Endothelial cell of umbilical vein (primary cell): ENCODE measurements at regions of chr16 and their contacts with region 1.

Region 1: GRCh38 chr16:11715246-11715947 is 27.3 kb downstream of the TXNDC11 start:
- DNase-seq: no peak
- H3K4me3 ChIP-seq: no peak overlapping the region
- H3K27ac ChIP-seq: no peak overlapping the region
- H3K4me1 ChIP-seq: no peaks in the 10 kb centered on the region
- H3K27me3 ChIP-seq: no peaks in the 10 kb centered on the region
- CTCF ChIP-seq: no peak
- POLR2A ChIP-seq: no peak

Region 2: DNA sequence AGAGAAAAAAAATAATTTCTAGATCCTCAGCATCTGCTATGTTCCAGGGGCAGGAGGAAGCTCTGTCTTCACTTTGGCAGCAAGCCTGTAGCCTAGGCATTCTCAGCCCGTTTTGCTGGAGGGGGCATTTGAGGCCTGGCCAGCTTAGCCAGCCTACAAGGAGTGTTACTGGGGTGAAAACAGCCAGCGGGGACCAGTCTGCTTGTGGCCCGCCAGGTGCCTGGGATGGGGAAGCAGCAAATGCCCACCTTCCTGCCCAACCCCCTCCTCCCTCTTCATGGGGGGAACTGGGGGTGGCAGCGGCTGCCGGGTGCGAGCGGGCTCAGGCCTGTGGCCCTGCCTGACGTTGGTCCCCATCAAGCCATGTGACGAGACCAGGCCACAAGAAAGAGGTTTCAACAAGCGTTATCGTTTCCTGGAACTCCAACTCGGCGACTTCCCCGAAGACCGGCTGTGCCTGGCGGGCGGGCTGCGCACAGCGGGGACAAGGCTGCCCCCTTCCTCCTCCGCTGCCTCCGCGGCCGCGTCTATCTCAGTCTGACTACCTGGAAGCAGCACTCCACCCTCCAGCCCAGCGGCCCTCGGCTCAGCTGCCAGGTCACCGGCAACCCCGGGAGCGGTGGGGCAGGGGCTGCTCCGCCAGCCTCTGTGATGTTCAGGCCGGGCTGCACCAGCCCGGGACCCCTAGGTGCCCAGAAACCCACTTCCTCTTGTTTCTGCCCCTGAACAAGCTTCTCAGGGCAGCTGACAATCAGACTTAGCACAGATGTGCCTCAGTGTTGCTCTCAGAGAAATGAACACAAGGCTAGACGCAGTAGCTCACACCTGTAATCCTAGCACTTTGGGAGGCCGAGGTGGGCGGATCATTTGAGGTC is 482.3 kb before region 1 on chr16:
- CTCF ChIA-PET with region 1: no interaction called
- POLR2A ChIA-PET with region 1: no interaction called
- dilution Hi-C with region 1: no loop called
- intact Hi-C with region 1: no loop called
- DNase-seq: no peak
- H3K4me3 ChIP-seq: no peak overlapping the region
- H3K27ac ChIP-seq: no peak overlapping the region
- H3K4me1 ChIP-seq: no peaks in the 10 kb centered on the region
- H3K27me3 ChIP-seq: no peaks in the 10 kb centered on the region
- CTCF ChIP-seq: no peak
- POLR2A ChIP-seq: no peak

Region 3: GRCh38 chr16:11386791-11387546 is 328.4 kb before region 1 on chr16:
- CTCF ChIA-PET with region 1: interaction called, 26 read pairs
- POLR2A ChIA-PET with region 1: no interaction called
- dilution Hi-C with region 1: no loop called
- intact Hi-C with region 1: no loop called
- DNase-seq: peak; percentile 13
- H3K4me3 ChIP-seq: no peak overlapping the region
- H3K27ac ChIP-seq: no peak overlapping the region
- H3K4me1 ChIP-seq: no peaks in the 10 kb centered on the region
- H3K27me3 ChIP-seq: no peaks in the 10 kb centered on the region
- CTCF ChIP-seq: peak; percentile 47 to 70
- POLR2A ChIP-seq: no peak

Region 4: DNA sequence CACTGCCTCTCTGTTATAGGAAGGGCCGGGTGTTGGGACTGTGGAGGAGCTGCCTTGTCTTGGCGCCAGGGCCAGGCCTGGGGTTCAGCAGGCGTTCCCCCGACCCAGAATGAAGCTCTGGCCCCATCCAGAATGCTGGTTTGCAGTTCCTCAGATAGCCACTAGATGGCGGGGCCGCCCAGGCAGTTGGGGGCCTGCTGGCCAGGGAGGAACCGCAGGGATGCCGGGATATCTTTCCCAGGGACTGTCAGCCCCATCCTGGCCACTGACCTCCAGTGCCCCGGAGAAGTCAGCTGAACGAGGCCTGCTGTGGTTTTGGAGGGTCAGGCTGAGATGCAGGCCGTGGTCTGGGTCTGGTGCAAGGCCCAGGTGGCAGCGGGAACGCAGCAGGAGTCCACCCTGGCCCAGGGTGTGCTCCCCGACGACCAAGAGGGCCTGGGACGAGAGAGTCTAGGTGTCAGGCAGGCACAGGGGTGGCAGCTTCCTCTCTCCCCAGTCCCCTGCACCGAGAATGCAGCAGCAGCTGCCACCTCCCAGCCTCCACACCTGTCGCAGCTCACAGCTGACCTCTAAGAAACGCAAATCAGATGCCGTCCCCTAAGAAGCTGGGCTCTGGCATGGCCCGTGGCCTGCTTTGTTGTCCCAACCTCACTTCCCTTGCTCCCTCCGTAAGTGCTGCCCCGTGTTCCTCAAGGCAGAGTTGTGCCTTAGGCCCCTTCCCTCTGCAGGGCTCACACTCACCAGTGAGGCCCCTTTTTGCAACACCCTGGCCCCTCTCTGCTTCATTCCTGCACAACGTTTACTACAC is 319.0 kb before region 1 on chr16:
- CTCF ChIA-PET with region 1: interaction called, 81 read pairs
- POLR2A ChIA-PET with region 1: no interaction called
- dilution Hi-C with region 1: no loop called
- intact Hi-C with region 1: loop called (anchors 1 kb)
- DNase-seq: peak; percentile 39
- H3K4me3 ChIP-seq: no peak overlapping the region
- H3K27ac ChIP-seq: no peak overlapping the region
- H3K4me1 ChIP-seq: no peaks in the 10 kb centered on the region
- H3K27me3 ChIP-seq: no peaks in the 10 kb centered on the region
- CTCF ChIP-seq: peak; percentile 95 to 96
- POLR2A ChIP-seq: no peak

Region 5: DNA sequence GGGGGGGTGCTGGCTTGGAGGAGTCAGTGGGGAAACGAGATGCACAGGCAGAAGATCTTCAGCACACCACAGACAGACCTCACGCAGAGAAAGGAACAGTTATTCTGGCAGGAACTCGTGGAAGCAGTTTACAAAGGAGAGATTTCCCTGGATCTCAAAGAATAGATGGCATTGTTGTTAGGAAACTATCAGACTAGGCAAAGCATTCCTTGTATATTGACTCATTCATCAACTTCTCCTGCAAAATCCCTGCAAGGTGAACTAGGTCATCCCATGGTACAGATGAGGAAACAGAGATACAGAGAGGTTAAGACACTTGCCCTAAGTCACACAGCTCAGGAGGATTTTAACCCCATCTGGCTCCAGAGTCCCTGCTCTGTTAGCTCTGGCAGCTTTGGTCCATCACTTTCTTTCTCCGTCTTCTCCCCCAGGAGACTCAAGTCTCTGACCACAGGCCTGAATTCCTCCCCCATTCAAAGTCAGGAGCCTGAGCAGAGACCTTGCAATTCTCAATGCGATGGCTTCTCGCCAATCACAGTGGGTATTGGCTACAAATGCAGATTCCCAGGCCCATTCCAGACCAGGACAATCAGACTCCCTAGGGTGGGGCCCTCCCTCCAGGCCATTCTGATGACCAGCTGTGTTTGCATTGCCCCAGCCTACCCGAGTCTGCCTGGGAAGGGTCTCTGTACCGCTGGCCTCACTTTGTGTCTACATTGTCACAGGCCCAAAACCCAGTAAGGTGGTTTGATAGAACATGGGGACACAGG is 185.0 kb before region 1 on chr16:
- CTCF ChIA-PET with region 1: interaction called, 41 read pairs
- POLR2A ChIA-PET with region 1: no interaction called
- dilution Hi-C with region 1: no loop called
- intact Hi-C with region 1: loop called (anchors 1 kb)
- DNase-seq: peak; percentile 56
- H3K4me3 ChIP-seq: no peak overlapping the region
- H3K27ac ChIP-seq: no peak overlapping the region
- H3K4me1 ChIP-seq: peaks cover 9% of the 10 kb centered on the region
- H3K27me3 ChIP-seq: peaks cover 3 to 5% of the 10 kb centered on the region in 2 experiments
- CTCF ChIP-seq: no peak
- POLR2A ChIP-seq: no peak

Region 6: DNA sequence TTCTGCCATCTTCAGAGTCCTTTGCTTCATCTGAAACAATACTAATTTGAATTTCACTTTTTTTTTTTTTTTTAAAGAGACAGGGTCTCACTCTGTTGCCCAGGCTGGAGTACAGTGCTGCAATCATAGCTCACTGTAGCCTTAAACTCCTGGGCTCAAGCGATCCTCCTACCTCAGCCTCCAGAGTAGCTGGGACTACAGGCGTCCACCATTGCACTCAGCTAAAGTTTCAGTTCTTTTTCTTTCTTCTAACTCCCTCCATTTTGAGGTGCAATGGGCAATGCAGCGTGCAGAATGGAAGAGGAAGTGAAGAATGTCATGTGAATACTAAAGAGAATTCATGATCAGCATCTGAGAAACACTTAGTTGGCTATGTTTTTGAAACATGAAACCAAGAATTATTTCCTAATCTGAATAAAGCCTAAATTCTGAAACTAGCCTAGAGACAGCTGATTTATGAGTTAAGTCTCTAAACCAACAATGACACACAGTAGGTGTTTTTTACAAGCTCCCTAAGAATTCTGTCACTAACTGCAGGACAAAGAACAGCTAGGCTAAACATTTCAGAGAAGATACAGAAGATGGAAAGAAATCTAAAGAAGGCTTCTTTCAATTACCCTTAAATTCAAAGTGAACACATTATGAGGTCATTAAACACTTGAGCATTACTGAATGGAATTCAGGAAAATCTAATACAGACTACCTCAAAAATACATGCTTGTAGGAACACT is 26.2 kb before region 1 on chr16:
- CTCF ChIA-PET with region 1: interaction called, 16 read pairs
- POLR2A ChIA-PET with region 1: no interaction called
- dilution Hi-C with region 1: no loop called
- intact Hi-C with region 1: no loop called
- DNase-seq: no peak
- H3K4me3 ChIP-seq: no peak overlapping the region
- H3K27ac ChIP-seq: no peak overlapping the region
- H3K4me1 ChIP-seq: no peaks in the 10 kb centered on the region
- H3K27me3 ChIP-seq: no peaks in the 10 kb centered on the region
- CTCF ChIP-seq: no peak
- POLR2A ChIP-seq: no peak

Region 7: GRCh38 chr16:11698271-11698689 is 17.1 kb before region 1 on chr16:
- CTCF ChIA-PET with region 1: interaction called, 12 read pairs
- POLR2A ChIA-PET with region 1: interaction called, 13 read pairs
- dilution Hi-C with region 1: no loop called
- intact Hi-C with region 1: no loop called
- DNase-seq: no peak
- H3K4me3 ChIP-seq: no peak overlapping the region
- H3K27ac ChIP-seq: no peak overlapping the region
- H3K4me1 ChIP-seq: no peaks in the 10 kb centered on the region
- H3K27me3 ChIP-seq: no peaks in the 10 kb centered on the region
- CTCF ChIP-seq: no peak
- POLR2A ChIP-seq: no peak